Common myeloid progenitor, CD34-positive (primary cell): ENCODE measurements at regions of chr1 and their contacts with region 1.

Region 1: GRCh38 chr1:30779294-30780071 is 21.9 kb upstream of the LAPTM5 start:
- DNase-seq: peak; percentile 83 to 91 (median 88)
- H3K4me3 ChIP-seq: peak overlapping the region in 1 of 7 experiments; percentile 29
- H3K27ac ChIP-seq: peak overlapping the region in 1 of 2 experiments; percentile 69
- H3K4me1 ChIP-seq: peaks cover 0 to 29% (median 24%) of the 10 kb centered on the region in 4 experiments
- H3K27me3 ChIP-seq: peaks cover 0 to 3% (median 0%) of the 10 kb centered on the region in 5 experiments

Region 2: GRCh38 chr1:30718636-30719405 is 60.7 kb before region 1 on chr1:
- CTCF ChIA-PET with region 1: interaction called, 356 read pairs
- POLR2A ChIA-PET with region 1: interaction called, 14 read pairs
- DNase-seq: peak; percentile 94 to 96 (median 96)
- H3K4me3 ChIP-seq: peak overlapping the region; percentile 51 to 80 (median 67)
- H3K27ac ChIP-seq: peak overlapping the region; percentile 85 to 93
- H3K4me1 ChIP-seq: peaks cover 0 to 28% (median 15%) of the 10 kb centered on the region in 4 experiments
- H3K27me3 ChIP-seq: peaks cover 0 to 2% (median 0%) of the 10 kb centered on the region in 5 experiments

Region 3: DNA sequence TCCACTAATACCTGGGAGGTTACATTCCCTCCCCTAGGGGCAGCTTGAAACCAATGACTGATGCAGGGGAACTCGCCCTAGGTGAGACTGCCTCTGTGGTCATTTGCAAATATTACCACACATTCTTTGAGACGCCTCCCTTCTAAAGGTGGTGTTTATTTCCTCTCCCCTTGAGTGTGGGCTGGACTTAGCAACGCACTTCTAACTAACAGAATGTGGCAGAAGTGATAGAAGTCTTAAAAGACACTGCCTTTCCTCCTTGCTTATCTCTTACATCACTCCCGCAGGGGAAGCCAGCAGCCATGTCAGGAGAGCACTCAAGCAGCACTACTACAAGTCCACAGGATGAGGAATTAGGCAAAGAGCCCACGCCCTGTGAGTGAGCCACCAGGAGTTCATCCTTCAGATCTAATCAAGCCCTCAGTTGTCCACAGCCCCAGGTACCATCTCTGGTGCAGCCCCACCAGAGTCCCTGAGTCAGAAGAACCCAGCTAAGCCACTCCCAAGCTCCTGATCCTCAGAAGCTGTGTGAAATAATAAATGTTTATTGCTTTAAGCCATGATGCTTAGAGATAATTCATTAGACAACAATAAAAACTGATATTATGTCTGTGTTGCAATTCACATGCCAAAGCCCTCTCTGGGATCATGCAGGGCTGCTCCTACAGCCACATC is 41.3 kb before region 1 on chr1:
- CTCF ChIA-PET with region 1: interaction called, 51 read pairs
- POLR2A ChIA-PET with region 1: interaction called, 15 read pairs
- DNase-seq: no peak
- H3K4me3 ChIP-seq: no peak overlapping the region
- H3K27ac ChIP-seq: no peak overlapping the region
- H3K4me1 ChIP-seq: peaks cover 12 to 47% (median 43%) of the 10 kb centered on the region in 4 experiments
- H3K27me3 ChIP-seq: no peaks in the 10 kb centered on the region

Region 4: GRCh38 chr1:30750731-30751291 is 28.7 kb before region 1 on chr1:
- CTCF ChIA-PET with region 1: interaction called, 58 read pairs
- POLR2A ChIA-PET with region 1: interaction called, 10 read pairs
- DNase-seq: peak in 1 of 3 donors; percentile 46
- H3K4me3 ChIP-seq: peak overlapping the region in 3 of 7 experiments; percentile 9 to 31 (median 29)
- H3K27ac ChIP-seq: peak overlapping the region; percentile 17 to 75
- H3K4me1 ChIP-seq: peaks cover 38 to 100% (median 99%) of the 10 kb centered on the region in 4 experiments
- H3K27me3 ChIP-seq: no peaks in the 10 kb centered on the region

Region 5: DNA sequence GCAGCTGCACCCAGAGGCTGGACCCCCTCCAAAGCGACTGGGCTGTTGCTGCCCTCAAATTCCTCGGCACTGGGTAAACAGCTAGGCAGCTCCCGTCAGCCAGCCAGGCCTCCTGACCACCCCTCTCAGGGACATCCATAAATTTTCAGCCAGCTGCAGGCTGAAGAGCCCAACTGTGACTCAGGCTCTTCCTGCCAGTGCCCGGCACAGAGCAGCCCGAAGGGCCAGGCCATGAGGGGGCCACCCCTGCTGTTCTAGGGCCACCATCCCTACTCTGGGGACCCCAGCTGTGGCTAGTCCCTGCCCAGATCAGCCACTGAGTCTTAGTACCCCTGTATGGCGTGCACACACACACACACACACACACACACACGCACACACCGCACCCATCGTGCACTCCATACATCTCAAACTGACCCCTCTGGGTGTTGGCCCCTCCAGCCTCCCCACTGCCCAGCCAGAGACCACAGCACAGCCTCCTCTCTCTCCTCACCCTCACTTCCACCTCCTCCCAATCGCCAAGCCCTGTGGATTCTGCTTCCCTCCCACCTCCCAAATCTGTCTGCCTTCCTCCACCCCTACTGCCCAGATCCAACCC is 15.7 kb before region 1 on chr1:
- CTCF ChIA-PET with region 1: interaction called, 58 read pairs
- POLR2A ChIA-PET with region 1: interaction called, 3 read pairs
- DNase-seq: no peak
- H3K4me3 ChIP-seq: no peak overlapping the region
- H3K27ac ChIP-seq: no peak overlapping the region
- H3K4me1 ChIP-seq: peaks cover 24 to 73% (median 71%) of the 10 kb centered on the region in 4 experiments
- H3K27me3 ChIP-seq: no peaks in the 10 kb centered on the region

Region 6: DNA sequence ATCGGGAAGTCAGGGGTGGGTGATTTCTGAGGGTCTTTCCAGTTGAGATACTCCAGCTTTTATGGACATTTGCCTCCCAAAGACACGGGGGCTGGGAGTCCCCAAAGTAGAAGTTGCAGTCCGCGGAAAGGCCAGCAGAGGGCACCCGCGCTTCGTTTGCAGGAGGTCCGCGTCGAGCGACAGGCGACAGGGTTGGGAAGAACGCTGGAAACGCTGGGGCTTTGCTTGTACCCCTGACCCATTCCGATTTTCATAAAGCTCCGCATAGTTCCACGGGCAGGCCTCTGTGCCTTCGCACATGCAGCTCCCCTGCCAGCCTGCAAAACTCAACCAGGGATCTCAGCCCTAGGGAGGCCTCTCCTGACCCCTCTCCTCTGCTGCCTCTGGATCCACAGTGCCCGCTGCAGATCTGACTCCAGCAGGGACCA is 22.3 kb after region 1 on chr1:
- CTCF ChIA-PET with region 1: interaction called, 33 read pairs
- POLR2A ChIA-PET with region 1: no interaction called
- DNase-seq: peak; percentile 57 to 74 (median 63)
- H3K4me3 ChIP-seq: no peak overlapping the region
- H3K27ac ChIP-seq: no peak overlapping the region
- H3K4me1 ChIP-seq: peaks cover 0 to 12% (median 10%) of the 10 kb centered on the region in 4 experiments
- H3K27me3 ChIP-seq: peaks cover 5 to 56% (median 49%) of the 10 kb centered on the region in 5 experiments

Region 7: GRCh38 chr1:30919025-30919881 is 139.8 kb after region 1 on chr1:
- CTCF ChIA-PET with region 1: interaction called, 96 read pairs
- POLR2A ChIA-PET with region 1: no interaction called
- DNase-seq: peak; percentile 95 to 99 (median 99)
- H3K4me3 ChIP-seq: peak overlapping the region in 2 of 7 experiments; percentile 11 to 62
- H3K27ac ChIP-seq: peak overlapping the region in 1 of 2 experiments; percentile 75
- H3K4me1 ChIP-seq: peaks cover 0 to 28% (median 26%) of the 10 kb centered on the region in 4 experiments
- H3K27me3 ChIP-seq: peaks cover 0 to 6% (median 2%) of the 10 kb centered on the region in 5 experiments